ENCODE measurements at regions of chr3 and their contacts with region 1.

Region 1: DNA sequence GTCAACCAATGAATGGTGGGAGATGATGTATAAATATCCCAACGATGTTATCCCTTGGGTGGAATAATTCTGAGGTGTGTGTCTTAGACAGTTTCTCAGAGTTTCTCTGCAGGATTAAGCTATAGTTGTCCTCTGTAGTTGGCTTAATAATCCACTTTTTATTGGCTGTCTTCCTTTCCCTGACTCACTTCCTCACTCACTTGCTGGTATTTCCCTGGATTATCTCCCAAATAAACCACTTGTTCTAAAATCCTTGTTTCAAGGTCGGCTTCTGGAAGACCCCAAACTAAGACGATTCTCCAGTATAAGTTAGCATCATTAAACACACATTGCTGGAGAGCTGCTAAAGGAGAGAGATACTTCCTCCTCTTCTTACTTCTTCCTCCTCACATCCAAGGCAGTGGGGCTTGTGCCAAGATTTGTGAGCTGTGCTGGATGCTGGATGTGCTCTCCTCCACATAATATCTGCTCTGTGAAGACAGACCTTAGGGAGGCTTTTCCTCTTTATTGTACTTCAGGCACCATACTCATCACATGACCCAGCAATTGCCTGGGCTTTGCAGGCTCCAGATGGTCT is 22.5 kb upstream of the ROPN1 start:
- DNase-seq: no peak
- ATAC-seq: no peak
- H3K4me3 ChIP-seq: no peak overlapping the region
- H3K27ac ChIP-seq: no peak overlapping the region
- H3K4me1 ChIP-seq: no peaks in the 10 kb centered on the region
- CTCF ChIP-seq: no peak
- EP300 ChIP-seq: no peak
- POLR2A ChIP-seq: no peak
- RAD21 ChIP-seq: no peak

Region 2: GRCh38 chr3:123778991-123779622 is 235.3 kb before region 1 on chr3:
- CTCF ChIA-PET with region 1: no interaction called
- POLR2A ChIA-PET with region 1: no interaction called
- DNase-seq: no peak
- ATAC-seq: no peak
- H3K4me3 ChIP-seq: no peak overlapping the region
- H3K27ac ChIP-seq: peak overlapping the region in 1 of 2 experiments; percentile 23; a peak in 1 of 6 replicates
- H3K4me1 ChIP-seq: peaks cover 27% of the 10 kb centered on the region
- CTCF ChIP-seq: no peak
- EP300 ChIP-seq: no peak
- POLR2A ChIP-seq: no peak
- RAD21 ChIP-seq: no peak

Region 3: DNA sequence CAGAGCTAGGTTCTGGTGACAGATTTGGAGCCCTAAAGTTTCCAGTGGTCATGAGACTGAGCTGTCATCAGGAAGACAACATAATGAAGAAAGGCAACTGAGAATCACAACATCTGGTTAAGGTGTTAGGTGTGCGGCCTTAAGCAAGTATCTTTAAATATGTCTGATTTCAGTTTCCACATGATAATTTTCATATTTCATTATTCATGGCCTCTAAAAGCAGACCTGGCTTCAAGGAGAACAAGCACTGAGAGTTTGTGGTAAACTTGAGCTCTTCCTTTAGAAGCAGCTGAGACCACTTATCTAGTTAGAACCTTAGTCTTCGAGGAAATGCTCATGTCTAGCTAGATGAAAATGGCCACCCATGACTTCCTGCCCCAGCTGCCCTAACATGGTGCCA is 104.7 kb before region 1 on chr3:
- CTCF ChIA-PET with region 1: no interaction called
- POLR2A ChIA-PET with region 1: no interaction called
- DNase-seq: no peak
- ATAC-seq: no peak
- H3K4me3 ChIP-seq: no peak overlapping the region
- H3K27ac ChIP-seq: no peak overlapping the region
- H3K4me1 ChIP-seq: no peaks in the 10 kb centered on the region
- CTCF ChIP-seq: no peak
- EP300 ChIP-seq: no peak
- POLR2A ChIP-seq: no peak
- RAD21 ChIP-seq: no peak

Region 4: DNA sequence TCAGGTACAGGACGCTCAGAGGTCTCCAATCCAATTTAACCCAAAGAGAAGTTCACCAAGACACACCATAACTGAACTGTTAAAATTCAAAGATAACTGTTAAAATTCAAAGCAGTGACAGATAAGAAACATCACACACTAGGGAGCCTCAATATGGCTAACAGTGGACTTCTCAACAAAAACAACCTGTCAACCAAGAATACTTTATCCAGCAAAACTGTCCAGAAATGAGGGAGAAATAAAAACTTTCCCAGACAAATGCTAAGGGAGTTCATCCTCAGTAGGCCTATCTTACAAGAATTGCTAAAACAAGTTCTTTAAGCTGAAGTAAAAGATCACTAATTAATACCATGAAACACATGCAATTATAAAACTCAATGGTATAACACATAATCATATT is 94.1 kb before region 1 on chr3:
- CTCF ChIA-PET with region 1: no interaction called
- POLR2A ChIA-PET with region 1: no interaction called
- DNase-seq: no peak
- ATAC-seq: no peak
- H3K4me3 ChIP-seq: no peak overlapping the region
- H3K27ac ChIP-seq: no peak overlapping the region
- H3K4me1 ChIP-seq: no peaks in the 10 kb centered on the region
- CTCF ChIP-seq: no peak
- EP300 ChIP-seq: no peak
- POLR2A ChIP-seq: no peak
- RAD21 ChIP-seq: no peak

Region 5: DNA sequence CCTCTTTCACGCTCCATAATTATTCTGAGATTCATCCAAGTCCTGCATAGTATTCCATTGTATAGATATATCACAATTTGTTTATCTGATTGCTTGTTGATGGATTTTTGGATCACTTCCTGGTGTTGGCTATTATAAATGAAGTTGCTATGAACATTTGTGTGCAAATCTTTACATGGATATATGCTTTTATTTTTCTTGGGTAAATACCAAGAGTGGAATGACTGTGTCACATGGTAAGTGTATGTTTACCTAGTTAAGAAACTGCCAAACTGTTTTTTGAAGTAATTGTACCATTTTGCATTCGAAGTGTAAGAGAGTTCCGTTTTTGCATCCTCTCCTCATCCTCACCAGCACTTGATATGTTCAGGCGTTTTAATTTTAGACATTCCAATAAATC is 12.1 kb after region 1 on chr3:
- CTCF ChIA-PET with region 1: interaction called, 11 read pairs
- POLR2A ChIA-PET with region 1: interaction called, 3 read pairs
- DNase-seq: no peak
- ATAC-seq: no peak
- H3K4me3 ChIP-seq: no peak overlapping the region
- H3K27ac ChIP-seq: no peak overlapping the region
- H3K4me1 ChIP-seq: no peaks in the 10 kb centered on the region
- CTCF ChIP-seq: no peak
- EP300 ChIP-seq: no peak
- POLR2A ChIP-seq: no peak
- RAD21 ChIP-seq: no peak

Region 6: DNA sequence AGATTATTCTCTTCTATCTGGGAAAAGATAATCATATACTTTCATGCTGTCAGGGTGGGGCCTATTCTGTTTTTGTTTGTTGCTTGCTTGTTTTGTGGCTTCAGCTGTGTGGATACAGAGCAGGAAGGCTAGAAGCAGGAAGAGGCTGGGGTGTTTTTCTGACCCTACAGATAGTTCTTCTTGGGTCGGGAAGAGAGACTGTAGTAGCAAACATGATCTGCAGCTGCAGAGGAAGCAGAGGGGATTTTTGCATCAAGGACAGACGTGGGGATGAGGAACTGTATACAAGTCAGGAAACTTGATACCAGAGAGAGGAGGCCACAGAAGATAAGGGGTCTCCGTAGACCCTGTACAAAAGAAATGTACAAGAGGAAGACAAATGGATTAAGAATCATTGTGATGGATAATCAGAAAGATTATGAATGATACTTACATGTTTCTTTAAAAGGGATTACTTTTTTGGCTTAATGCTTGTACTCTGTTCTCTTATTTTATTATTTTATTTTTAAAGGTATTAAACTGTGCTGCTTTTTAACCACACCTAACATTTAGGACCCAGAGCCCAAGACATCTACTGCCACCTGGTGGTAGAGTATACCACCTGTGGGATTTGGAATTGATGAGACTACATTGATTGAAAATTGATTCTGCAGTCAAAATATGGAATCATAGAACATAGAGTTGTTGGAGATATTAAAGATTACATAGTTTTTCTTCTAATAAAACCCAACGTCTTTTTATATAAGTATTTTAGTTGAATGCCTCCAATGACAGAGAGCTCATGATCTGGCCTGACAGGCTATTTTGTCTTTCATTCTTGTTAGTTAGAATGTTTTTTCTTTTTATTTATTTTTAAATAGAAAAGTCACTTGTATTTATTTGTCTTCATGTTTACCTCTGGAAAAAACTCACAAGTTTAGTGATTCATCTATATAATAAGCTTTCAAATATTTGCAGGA is 64.8 kb after region 1 on chr3:
- CTCF ChIA-PET with region 1: interaction called, 16 read pairs
- POLR2A ChIA-PET with region 1: no interaction called
- DNase-seq: peak; percentile 19 to 35
- ATAC-seq: peak in 1 of 2 experiments; percentile 66; a peak in 3 of 6 replicates
- H3K4me3 ChIP-seq: no peak overlapping the region
- H3K27ac ChIP-seq: no peak overlapping the region
- H3K4me1 ChIP-seq: no peaks in the 10 kb centered on the region
- CTCF ChIP-seq: peak; percentile 90
- EP300 ChIP-seq: no peak
- POLR2A ChIP-seq: no peak
- RAD21 ChIP-seq: peak; percentile 78 to 80

Measured in A549 (cell line).